SK-N-SH (cell line): ENCODE measurements at regions of chr2 and their contacts with region 1.

Region 1: DNA sequence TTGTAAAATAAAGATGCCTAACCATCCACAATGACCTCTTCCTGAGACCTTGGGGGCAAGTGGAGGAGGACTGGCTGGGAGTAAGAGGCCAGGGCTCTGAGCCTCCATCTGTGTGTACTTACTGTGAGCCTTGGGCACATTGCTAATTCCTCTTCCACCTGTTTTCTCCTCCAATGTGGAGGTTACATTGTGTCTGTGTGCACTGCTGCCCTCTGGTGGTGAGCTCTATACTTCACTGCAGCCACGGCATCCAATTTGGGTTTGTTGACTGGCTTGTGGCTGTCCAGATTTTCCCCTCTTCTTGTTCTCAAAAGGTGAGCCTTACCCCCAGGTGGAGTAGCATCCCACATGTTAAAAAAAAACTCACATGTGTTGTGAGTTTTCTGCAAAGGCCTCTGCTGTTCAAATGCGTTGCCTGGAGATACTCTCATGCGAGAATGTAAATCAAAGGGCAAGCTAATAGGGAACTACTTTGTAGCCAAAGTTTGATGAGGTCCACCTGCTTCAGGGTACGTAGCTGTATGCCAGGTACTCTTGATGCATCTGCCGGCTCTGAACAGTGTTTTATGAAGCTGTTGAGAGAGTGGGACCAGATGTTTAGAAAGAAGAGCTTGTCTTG is 80.8 kb downstream of the APOB start:
- DNase-seq: peak; percentile 84
- H3K4me3 ChIP-seq: no peak overlapping the region; a peak in 1 of 4 replicates
- H3K27ac ChIP-seq: no peak overlapping the region
- H3K4me1 ChIP-seq: no peaks in the 10 kb centered on the region; a peak in 1 of 4 replicates
- H3K27me3 ChIP-seq: peaks cover 14% of the 10 kb centered on the region; the same call in 1 of the 2 replicates
- CTCF ChIP-seq: peak; percentile 98
- EP300 ChIP-seq: no peak
- RAD21 ChIP-seq: peak; percentile 97

Region 2: GRCh38 chr2:20675701-20676352 is 287.2 kb before region 1 on chr2:
- CTCF ChIA-PET with region 1: interaction called, 96 read pairs
- POLR2A ChIA-PET with region 1: no interaction called
- DNase-seq: no peak
- H3K4me3 ChIP-seq: no peak overlapping the region
- H3K27ac ChIP-seq: peak overlapping the region in 1 of 2 experiments; percentile 45; a peak in 1 of 4 replicates
- H3K4me1 ChIP-seq: peaks cover 5 to 12% of the 10 kb centered on the region in 2 experiments; a peak in 3 of 4 replicates
- H3K27me3 ChIP-seq: peaks cover 10% of the 10 kb centered on the region
- CTCF ChIP-seq: peak; percentile 5; the same call in 1 of the 2 replicates
- EP300 ChIP-seq: no peak
- RAD21 ChIP-seq: no peak

Region 3: DNA sequence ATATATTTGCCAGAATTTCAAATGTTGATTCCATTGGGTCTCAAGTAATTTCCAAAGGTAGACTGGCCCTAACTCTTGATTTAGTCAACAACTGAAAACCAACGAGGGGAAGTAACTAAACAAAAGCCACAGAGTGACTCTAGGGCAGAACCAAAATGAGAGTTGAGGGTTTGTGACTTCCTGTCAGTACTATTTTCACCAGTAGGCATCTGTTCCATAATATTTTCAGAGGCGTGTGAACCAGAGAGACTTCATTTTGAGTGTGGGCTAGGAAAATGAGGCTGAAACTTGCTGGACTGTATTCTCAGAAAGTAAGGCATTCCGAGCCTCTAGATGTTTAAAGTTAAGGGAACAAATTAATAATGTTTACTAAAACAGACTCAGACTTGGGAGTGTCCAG is 225.5 kb before region 1 on chr2:
- CTCF ChIA-PET with region 1: no interaction called
- POLR2A ChIA-PET with region 1: no interaction called
- DNase-seq: no peak
- H3K4me3 ChIP-seq: no peak overlapping the region
- H3K27ac ChIP-seq: no peak overlapping the region
- H3K4me1 ChIP-seq: no peaks in the 10 kb centered on the region
- H3K27me3 ChIP-seq: no peaks in the 10 kb centered on the region
- CTCF ChIP-seq: no peak
- EP300 ChIP-seq: no peak
- RAD21 ChIP-seq: no peak

Region 4: DNA sequence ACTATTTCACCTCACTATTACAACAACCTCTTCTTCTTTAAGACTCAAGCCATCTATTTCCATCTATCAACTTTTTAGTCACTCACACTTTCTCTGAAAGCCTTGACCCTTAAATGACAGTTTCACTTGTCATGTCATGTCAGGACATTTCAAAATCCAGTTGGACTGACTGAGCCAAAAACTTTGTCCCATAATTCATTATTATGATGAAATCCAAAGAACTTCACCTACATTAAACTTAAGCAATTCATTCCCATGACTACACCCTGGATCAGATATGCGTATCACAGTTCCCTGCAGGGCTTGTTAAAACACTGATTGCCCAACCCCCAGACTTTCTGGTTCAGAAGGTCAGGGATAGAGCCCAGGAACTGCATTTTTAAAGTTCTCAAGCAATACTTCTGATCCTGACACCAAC is 166.7 kb before region 1 on chr2:
- CTCF ChIA-PET with region 1: interaction called, 10 read pairs
- POLR2A ChIA-PET with region 1: no interaction called
- DNase-seq: no peak
- H3K4me3 ChIP-seq: no peak overlapping the region
- H3K27ac ChIP-seq: no peak overlapping the region
- H3K4me1 ChIP-seq: no peaks in the 10 kb centered on the region
- H3K27me3 ChIP-seq: no peaks in the 10 kb centered on the region
- CTCF ChIP-seq: no peak
- EP300 ChIP-seq: no peak
- RAD21 ChIP-seq: no peak

Region 5: DNA sequence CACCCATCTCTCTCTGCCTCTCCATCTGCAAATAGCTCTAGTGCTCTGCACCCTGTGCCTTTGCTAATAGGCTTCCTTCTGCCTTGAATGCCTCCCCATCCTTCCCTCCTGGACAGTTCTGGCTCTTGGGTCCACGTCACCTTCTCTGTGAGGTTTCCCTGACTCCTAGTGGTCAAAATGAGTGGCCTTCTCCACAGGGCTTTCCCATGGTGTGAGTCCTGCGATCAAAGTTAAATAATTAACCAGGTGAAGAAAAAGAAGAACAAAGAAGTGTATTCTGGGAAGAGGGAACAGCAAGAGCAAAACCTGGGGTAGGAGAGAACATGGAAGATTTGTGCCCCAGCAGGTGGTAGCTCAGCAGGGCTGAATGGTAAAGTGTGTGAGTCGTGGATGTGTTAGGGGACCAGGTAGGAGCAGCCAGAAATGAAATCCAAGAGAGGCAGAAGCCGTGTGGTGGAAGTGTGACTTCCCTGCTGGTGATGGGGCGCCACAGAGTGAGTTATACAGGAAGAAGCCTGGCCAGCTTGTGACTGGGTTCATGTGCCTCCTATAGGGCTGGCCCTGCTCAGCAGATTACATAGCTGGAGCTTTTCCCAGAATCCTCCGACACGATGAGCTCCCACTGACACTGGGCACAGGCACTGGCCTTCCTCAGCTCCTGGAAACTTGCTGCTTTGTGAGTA is 46.3 kb before region 1 on chr2:
- CTCF ChIA-PET with region 1: interaction called, 17 read pairs
- POLR2A ChIA-PET with region 1: no interaction called
- DNase-seq: peak; percentile 50
- H3K4me3 ChIP-seq: no peak overlapping the region
- H3K27ac ChIP-seq: peak overlapping the region in 1 of 2 experiments; percentile 47; a peak in 2 of 4 replicates
- H3K4me1 ChIP-seq: peaks cover 13 to 20% of the 10 kb centered on the region in 2 experiments; a peak in 3 of 4 replicates
- H3K27me3 ChIP-seq: no peaks in the 10 kb centered on the region; the same call in 1 of the 2 replicates
- CTCF ChIP-seq: peak; percentile 45
- EP300 ChIP-seq: no peak
- RAD21 ChIP-seq: peak; percentile 74

Region 6: DNA sequence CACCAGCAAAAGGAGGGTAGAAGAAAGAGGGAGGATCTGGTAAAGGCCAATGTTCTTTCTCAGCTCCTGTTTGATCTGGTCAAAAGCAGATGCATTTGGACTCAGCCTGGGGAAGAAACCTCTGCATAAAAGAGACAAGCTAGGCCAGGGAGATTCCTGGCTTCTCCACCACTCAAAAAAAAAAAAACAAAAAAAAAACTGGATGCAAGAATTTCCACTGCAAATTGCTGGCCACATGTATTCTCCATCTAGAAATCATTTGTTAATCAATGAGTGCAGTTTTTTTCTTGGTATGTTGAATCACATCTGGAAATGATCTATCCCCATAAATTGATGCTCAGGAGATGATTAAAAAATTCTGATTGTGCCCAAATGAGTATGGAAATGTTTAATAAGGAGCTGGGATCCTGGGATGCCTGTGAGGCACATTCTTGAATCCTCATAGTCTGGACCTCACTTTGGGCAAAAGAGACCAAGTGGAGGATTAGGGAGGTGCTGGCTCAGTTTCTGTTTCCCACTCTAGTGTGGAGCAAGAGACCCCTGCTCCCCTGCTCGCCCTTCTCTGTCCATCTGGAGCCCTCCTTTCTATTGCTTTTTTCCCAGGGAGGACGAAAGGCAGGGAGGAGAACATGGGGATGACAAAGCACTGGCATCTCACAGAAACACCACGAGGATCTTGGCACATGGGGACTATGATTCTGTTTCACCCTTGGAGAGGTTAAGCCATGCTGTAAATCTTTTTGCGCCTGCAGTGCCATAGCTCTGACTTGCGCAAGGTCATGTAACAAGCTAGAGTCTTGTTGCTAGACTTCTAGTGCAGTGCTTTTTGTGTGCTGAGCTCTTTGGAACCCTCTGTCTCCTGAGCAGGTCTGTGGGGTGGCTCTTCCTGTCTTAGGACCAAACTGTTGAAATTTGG is 23.2 kb after region 1 on chr2:
- CTCF ChIA-PET with region 1: interaction called, 12 read pairs
- POLR2A ChIA-PET with region 1: no interaction called
- DNase-seq: no peak
- H3K4me3 ChIP-seq: no peak overlapping the region
- H3K27ac ChIP-seq: no peak overlapping the region
- H3K4me1 ChIP-seq: peaks cover 0 to 28% of the 10 kb centered on the region in 2 experiments; a peak in 2 of 4 replicates
- H3K27me3 ChIP-seq: no peaks in the 10 kb centered on the region
- CTCF ChIP-seq: no peak
- EP300 ChIP-seq: no peak
- RAD21 ChIP-seq: no peak

Region 7: DNA sequence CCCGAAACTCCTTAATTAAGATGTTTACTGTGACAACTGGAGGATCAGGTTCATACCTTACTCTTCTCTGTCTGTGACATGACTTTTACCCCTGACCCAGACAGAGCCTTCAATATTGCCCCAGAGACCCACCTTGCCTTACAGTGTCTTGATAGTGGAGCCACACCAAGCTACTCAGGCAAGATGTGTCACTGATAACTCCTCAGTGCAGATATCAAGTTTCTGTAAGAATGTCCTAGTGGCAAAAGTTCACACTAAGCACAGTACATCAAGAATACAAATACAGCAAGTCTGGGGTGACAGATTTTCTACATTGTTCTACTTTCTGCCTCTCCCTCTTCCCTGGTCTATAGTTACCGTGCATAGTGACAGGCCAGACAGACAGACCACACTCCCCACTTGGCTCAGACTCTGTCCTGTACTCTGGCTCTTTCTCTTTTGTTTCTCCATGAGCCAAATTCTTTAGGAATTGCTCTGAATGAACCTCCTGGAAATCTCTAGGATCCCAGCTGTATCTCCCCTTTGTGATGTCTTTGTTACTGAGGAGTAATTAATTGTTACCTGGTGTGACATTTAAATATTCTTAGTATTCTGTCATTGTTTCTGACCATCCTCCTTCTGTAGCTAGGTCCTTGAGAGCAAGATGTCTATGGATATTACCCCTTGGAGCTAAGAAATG is 105.0 kb after region 1 on chr2:
- CTCF ChIA-PET with region 1: no interaction called
- POLR2A ChIA-PET with region 1: no interaction called
- DNase-seq: no peak
- H3K4me3 ChIP-seq: no peak overlapping the region
- H3K27ac ChIP-seq: no peak overlapping the region
- H3K4me1 ChIP-seq: peaks cover 0 to 19% of the 10 kb centered on the region in 2 experiments; a peak in 2 of 4 replicates
- H3K27me3 ChIP-seq: no peaks in the 10 kb centered on the region
- CTCF ChIP-seq: no peak
- EP300 ChIP-seq: no peak
- RAD21 ChIP-seq: no peak